Endothelial cell of umbilical vein (primary cell): ENCODE measurements at regions of chr4 and their contacts with region 1.

Region 1: DNA sequence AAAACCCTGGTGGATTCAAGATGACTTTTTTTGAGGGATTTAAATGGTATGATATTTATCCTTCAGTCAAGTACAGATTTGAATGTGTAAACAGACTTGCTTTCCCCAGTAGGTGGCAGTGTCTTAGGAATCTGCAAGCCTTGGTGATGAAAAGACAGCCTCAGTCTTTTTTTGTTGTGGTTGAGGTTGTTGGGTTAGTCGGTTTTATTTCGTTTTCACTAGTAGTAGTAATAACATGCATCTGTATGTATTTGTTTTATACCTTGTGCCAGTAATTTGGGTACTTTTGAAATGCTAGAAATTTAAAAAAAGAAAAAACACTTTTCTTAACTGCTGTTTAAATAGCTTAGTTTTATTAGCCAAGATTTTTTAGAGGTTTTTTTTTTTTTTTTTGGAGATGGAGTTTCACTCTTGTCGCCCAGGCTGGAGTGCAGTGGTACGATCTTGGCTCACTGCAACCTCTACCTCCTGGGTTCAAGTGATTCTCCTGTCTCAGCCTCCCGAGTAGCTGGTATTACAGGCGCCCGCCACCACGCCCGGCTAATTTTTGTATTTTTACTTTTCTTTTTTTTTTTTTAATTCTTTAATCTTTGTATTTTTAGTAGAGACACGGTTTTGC is 39.2 kb downstream of the COPS4 start:
- DNase-seq: peak; percentile 72
- H3K4me3 ChIP-seq: no peak overlapping the region
- H3K27ac ChIP-seq: no peak overlapping the region
- H3K4me1 ChIP-seq: peaks cover 28% of the 10 kb centered on the region
- H3K27me3 ChIP-seq: no peaks in the 10 kb centered on the region
- CTCF ChIP-seq: peak; percentile 59 to 63
- POLR2A ChIP-seq: no peak

Region 2: GRCh38 chr4:83110223-83110945 is 36.2 kb after region 1 on chr4:
- CTCF ChIA-PET with region 1: interaction called, 47 read pairs
- POLR2A ChIA-PET with region 1: no interaction called
- dilution Hi-C with region 1: no loop called
- intact Hi-C with region 1: loop called (anchors 1 kb)
- DNase-seq: peak; percentile 86
- H3K4me3 ChIP-seq: peak overlapping the region; percentile 48 to 78 (median 70)
- H3K27ac ChIP-seq: peak overlapping the region; percentile 71
- H3K4me1 ChIP-seq: peaks cover 13% of the 10 kb centered on the region
- H3K27me3 ChIP-seq: no peaks in the 10 kb centered on the region
- CTCF ChIP-seq: peak; percentile 72 to 87
- POLR2A ChIP-seq: peak; percentile 31

Region 3: GRCh38 chr4:83267121-83267829 is 193.1 kb after region 1 on chr4:
- CTCF ChIA-PET with region 1: interaction called, 120 read pairs
- POLR2A ChIA-PET with region 1: no interaction called
- dilution Hi-C with region 1: no loop called
- intact Hi-C with region 1: no loop called
- DNase-seq: peak; percentile 36
- H3K4me3 ChIP-seq: no peak overlapping the region
- H3K27ac ChIP-seq: no peak overlapping the region
- H3K4me1 ChIP-seq: peaks cover 5% of the 10 kb centered on the region
- H3K27me3 ChIP-seq: no peaks in the 10 kb centered on the region
- CTCF ChIP-seq: no peak
- POLR2A ChIP-seq: no peak